ENCODE measurements at regions of chr1 and their contacts with region 1.

Region 1: DNA sequence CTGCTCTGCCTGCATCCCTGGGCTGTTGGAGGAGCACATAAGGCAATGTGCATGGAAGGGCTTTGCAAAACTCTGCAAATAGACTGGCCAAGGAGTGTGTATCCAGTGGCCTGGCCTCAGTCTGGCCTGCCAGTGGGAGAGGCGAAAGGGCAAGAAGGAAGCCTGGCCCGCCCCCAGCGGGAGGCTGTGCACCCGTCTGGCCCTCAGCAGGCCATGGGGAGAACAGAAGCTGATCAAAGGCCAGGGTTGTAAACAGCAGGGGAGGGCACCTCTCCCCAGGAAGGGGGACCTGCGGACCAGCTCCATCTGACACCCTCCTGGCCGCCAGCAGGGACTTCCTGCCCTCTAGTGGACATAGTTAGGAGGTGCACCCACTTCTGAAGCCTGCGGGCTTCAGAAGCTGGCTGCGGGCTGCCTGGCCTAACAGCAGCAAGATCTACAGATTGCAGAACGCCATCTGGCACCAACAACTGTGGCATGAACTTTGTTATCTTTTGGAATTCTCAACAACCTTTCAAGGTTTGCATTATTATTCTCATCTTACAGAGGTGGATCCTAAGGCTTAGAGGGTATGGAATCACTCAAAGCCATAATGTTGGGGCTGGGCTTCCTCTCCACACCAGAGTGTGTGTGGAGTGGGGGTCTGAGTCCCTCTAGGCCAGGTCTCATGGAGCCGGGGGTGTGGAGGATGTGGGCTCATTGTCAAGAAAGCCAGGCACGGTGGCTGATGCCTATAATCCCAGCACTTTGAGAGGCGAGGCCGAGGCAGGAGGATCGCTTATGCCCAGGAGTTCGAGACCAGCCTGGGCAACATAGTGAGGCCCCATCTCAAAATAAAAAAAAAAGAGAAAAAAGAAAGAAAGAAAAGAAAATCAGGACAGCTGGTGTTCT is 18.9 kb upstream of the CDK18 start:
- DNase-seq: no peak
- H3K4me3 ChIP-seq: no peak overlapping the region
- H3K27ac ChIP-seq: no peak overlapping the region
- H3K4me1 ChIP-seq: no peaks in the 10 kb centered on the region
- H3K27me3 ChIP-seq: no peaks in the 10 kb centered on the region
- CTCF ChIP-seq: peak; percentile 68 to 86 (median 76)
- POLR2A ChIP-seq: no peak

Region 2: DNA sequence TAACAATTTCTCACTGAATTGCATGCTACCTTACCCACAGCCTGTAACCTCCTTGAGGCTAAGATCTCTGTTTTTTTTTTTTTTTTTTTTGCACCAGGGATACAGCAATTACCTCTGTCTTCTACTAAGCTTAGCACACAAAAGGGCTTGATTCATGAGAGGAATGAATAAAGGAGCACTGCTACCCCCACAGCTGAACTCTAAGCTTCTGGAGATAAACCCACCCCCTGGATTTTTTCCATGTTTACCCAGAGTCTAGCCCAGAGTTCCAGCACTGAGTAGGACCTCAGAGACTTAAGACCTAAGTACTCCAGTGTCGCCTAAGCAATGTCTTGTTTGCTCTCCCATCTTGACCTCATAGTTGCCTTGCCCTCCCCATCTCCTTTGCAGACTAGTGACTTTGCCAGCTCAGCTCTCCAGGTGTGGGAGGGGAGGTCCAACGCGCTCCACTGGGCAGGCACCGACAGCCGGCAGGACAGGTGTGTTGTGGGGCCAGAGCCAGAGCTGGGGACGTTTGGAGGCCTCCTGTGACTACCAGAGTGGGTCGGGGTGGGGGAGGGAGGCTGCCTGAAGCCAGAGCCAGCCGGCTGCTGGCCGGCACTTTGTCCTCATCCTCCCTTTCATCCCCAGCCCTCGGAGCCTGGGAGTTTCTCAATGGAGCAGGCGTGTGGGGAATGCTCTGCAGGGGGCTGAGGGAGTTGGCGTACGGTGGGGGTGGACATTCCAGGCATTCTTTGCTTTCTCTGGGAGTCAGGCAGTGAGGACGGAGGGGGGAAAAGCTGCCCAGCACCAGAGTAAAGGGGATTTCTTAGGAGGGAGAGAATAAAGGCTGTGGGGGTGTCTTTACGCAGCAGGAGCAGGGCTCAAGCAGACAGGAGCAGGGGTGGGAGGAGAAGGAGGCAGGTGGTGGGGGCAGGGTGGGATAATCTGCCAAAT is 184.4 kb before region 1 on chr1:
- intact Hi-C with region 1: no loop called
- DNase-seq: no peak
- H3K4me3 ChIP-seq: no peak overlapping the region
- H3K27ac ChIP-seq: no peak overlapping the region
- H3K4me1 ChIP-seq: peaks cover 8% of the 10 kb centered on the region
- H3K27me3 ChIP-seq: no peaks in the 10 kb centered on the region
- CTCF ChIP-seq: no peak
- POLR2A ChIP-seq: no peak

Region 3: GRCh38 chr1:205355054-205355453 is 130.5 kb before region 1 on chr1:
- intact Hi-C with region 1: loop called (anchors 5 kb)
- DNase-seq: no peak
- H3K4me3 ChIP-seq: no peak overlapping the region
- H3K27ac ChIP-seq: no peak overlapping the region
- H3K4me1 ChIP-seq: peaks cover 9% of the 10 kb centered on the region
- H3K27me3 ChIP-seq: no peaks in the 10 kb centered on the region
- CTCF ChIP-seq: no peak
- POLR2A ChIP-seq: no peak

Region 4: GRCh38 chr1:205528887-205529825 is 43.6 kb after region 1 on chr1:
- intact Hi-C with region 1: loop called (anchors 5 kb)
- DNase-seq: no peak
- H3K4me3 ChIP-seq: peak overlapping the region; percentile 36 to 45
- H3K27ac ChIP-seq: no peak overlapping the region
- H3K4me1 ChIP-seq: peaks cover 6% of the 10 kb centered on the region
- H3K27me3 ChIP-seq: no peaks in the 10 kb centered on the region
- CTCF ChIP-seq: peak; percentile 87 to 96 (median 93)
- POLR2A ChIP-seq: no peak